Testis (tissue), 5 donors: ENCODE measurements at regions of chr9 and their contacts with region 1.

Region 1: GRCh38 chr9:70484210-70485130 is 70.0 kb upstream of the KLF9 start:
- DNase-seq: peak; percentile 58
- H3K4me3 ChIP-seq: no peak overlapping the region
- H3K27ac ChIP-seq: peak overlapping the region in 1 of 2 donors; percentile 71
- H3K4me1 ChIP-seq: peaks cover 46% of the 10 kb centered on the region
- H3K27me3 ChIP-seq: no peaks in the 10 kb centered on the region
- CTCF ChIP-seq: peak; percentile 67 to 88 (median 83)
- POLR2A ChIP-seq: no peak

Region 2: DNA sequence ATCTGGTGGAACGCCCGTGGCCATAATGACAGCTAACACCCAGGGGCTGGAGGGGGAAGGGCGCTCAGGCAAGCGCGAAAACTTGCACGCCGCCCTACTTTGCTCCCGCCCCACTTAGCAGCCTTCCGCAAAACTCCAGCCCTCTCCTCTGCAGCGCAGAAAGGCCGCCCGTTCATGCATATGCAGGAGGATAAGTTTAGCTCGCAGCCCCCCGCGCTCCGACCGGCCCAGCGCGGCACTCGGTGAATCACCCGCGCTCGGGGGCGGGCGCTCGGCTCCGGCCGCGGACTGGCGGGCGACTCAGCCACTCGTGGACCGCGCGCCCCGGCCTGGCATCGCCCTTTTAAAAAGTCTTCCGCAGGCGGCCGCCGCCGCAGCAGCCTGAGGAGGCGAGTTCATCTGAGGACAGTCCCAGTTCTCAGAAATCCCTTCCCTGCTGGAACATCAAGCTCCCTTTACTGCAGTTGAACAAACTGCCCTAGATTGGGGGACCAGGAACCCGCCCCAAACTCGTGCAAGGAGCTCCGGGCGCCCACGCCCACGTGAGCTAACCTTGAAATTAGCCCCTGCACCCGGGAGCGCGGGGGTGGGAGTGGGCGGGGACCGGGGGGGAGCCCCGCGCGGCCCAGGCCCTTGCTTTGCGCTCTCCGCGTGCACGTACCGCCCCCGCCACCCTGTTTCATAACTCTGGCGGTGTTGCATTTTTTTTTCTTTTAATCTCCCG is 65.5 kb before region 1 on chr9:
- intact Hi-C with region 1: loop called (anchors 5 kb)
- DNase-seq: peak; percentile 95
- H3K4me3 ChIP-seq: peak overlapping the region; percentile 48 to 68
- H3K27ac ChIP-seq: peak overlapping the region; percentile 98 to 99
- H3K4me1 ChIP-seq: peaks cover 32% of the 10 kb centered on the region
- H3K27me3 ChIP-seq: no peaks in the 10 kb centered on the region
- CTCF ChIP-seq: no peak
- POLR2A ChIP-seq: peak; percentile 55

Region 3: GRCh38 chr9:70525519-70525918 is 41.0 kb after region 1 on chr9:
- intact Hi-C with region 1: no loop called
- DNase-seq: no peak
- H3K4me3 ChIP-seq: no peak overlapping the region
- H3K27ac ChIP-seq: no peak overlapping the region
- H3K4me1 ChIP-seq: no peaks in the 10 kb centered on the region
- H3K27me3 ChIP-seq: no peaks in the 10 kb centered on the region
- CTCF ChIP-seq: no peak
- POLR2A ChIP-seq: no peak

Region 4: GRCh38 chr9:70587201-70587600 is 102.7 kb after region 1 on chr9:
- intact Hi-C with region 1: loop called (anchors 5 kb)
- DNase-seq: no peak
- H3K4me3 ChIP-seq: no peak overlapping the region
- H3K27ac ChIP-seq: peak overlapping the region; percentile 5 to 37
- H3K4me1 ChIP-seq: peaks cover 10% of the 10 kb centered on the region
- H3K27me3 ChIP-seq: no peaks in the 10 kb centered on the region
- CTCF ChIP-seq: no peak
- POLR2A ChIP-seq: no peak

Region 5: GRCh38 chr9:70602321-70603019 is 118.0 kb after region 1 on chr9:
- intact Hi-C with region 1: loop called (anchors 5 kb)
- DNase-seq: peak; percentile 79
- H3K4me3 ChIP-seq: no peak overlapping the region
- H3K27ac ChIP-seq: peak overlapping the region; percentile 83 to 88
- H3K4me1 ChIP-seq: peaks cover 22% of the 10 kb centered on the region
- H3K27me3 ChIP-seq: no peaks in the 10 kb centered on the region
- CTCF ChIP-seq: peak; percentile 63 to 89 (median 71)
- POLR2A ChIP-seq: no peak